HepG2 (cell line): ENCODE measurements at regions of chr13 and their contacts with region 1.

Region 1: DNA sequence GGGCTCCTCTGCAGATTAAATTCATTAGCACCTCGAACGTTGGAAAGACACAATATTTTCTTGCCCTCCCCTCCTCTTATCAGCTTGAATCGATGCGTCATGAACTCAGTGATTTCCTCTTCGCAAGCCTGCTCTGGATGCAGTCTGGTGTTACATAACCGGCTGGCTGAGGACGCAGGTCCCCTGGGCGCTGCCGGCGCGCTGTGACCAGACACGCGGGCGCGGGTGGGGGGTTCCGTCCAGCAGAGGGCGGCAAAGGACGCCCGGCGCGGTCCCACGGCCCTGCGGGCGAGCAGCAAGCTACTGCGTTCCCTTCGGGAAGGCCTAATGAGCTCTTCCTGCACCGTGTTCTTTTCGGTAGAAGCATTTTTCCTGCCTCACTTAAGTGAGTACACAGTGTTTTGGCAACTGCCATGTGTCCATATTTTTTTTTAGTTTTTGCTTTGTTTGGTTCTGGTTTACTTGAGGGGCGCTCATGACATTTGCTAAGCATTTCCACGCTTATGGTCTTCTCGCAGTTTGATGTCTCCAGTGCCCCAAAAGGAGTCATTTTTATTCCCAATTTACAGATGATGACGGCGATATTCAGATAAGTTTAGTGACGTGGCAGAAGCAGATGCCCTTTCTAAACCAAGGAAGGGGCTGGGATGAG is 112.2 kb upstream of the MBNL2 start:
- DNase-seq: peak; percentile 68
- ATAC-seq: peak; percentile 99
- H3K4me3 ChIP-seq: peak overlapping the region in 1 of 3 experiments; percentile 15; a peak in 1 of 6 replicates
- H3K27ac ChIP-seq: no peak overlapping the region
- H3K4me1 ChIP-seq: peaks cover 13% of the 10 kb centered on the region
- H3K27me3 ChIP-seq: peaks cover 0 to 3% of the 10 kb centered on the region in 2 experiments; a peak in 3 of 5 replicates
- CTCF ChIP-seq: peak; percentile 99
- EP300 ChIP-seq: peak in 1 of 2 experiments; percentile 35; a peak in 1 of 4 replicates
- POLR2A ChIP-seq: no peak
- RAD21 ChIP-seq: peak; percentile 99

Region 2: GRCh38 chr13:96279904-96280303 is 830.1 kb before region 1 on chr13:
- CTCF ChIA-PET with region 1: no interaction called
- POLR2A ChIA-PET with region 1: no interaction called
- in situ Hi-C with region 1: no loop called
- intact Hi-C with region 1: loop called (anchors 5 kb)
- DNase-seq: no peak
- ATAC-seq: no peak
- H3K4me3 ChIP-seq: no peak overlapping the region
- H3K27ac ChIP-seq: no peak overlapping the region
- H3K4me1 ChIP-seq: no peaks in the 10 kb centered on the region
- H3K27me3 ChIP-seq: no peaks in the 10 kb centered on the region
- CTCF ChIP-seq: no peak
- EP300 ChIP-seq: no peak
- POLR2A ChIP-seq: no peak
- RAD21 ChIP-seq: no peak

Region 3: GRCh38 chr13:97030705-97031452 is 79.1 kb before region 1 on chr13:
- CTCF ChIA-PET with region 1: no interaction called
- POLR2A ChIA-PET with region 1: no interaction called
- in situ Hi-C with region 1: no loop called
- intact Hi-C with region 1: no loop called
- DNase-seq: peak; percentile 19
- ATAC-seq: peak; percentile 63; the same call in 2 of the 3 replicates
- H3K4me3 ChIP-seq: no peak overlapping the region
- H3K27ac ChIP-seq: no peak overlapping the region
- H3K4me1 ChIP-seq: no peaks in the 10 kb centered on the region
- H3K27me3 ChIP-seq: 0 out of 5 replicates have a peak, but pooled peaks cover 0 to 2% of the 10 kb centered on the region in 2 experiments
- CTCF ChIP-seq: peak; percentile 51
- EP300 ChIP-seq: no peak
- POLR2A ChIP-seq: no peak
- RAD21 ChIP-seq: no peak

Region 4: GRCh38 chr13:97165502-97166425 is 55.8 kb after region 1 on chr13:
- CTCF ChIA-PET with region 1: no interaction called
- POLR2A ChIA-PET with region 1: no interaction called
- in situ Hi-C with region 1: no loop called
- intact Hi-C with region 1: no loop called
- DNase-seq: peak; percentile 68
- ATAC-seq: peak; percentile 93
- H3K4me3 ChIP-seq: no peak overlapping the region
- H3K27ac ChIP-seq: no peak overlapping the region
- H3K4me1 ChIP-seq: peaks cover 12% of the 10 kb centered on the region
- H3K27me3 ChIP-seq: peaks cover 0 to 7% of the 10 kb centered on the region in 2 experiments; a peak in 1 of 5 replicates
- CTCF ChIP-seq: no peak
- EP300 ChIP-seq: peak in 1 of 2 experiments; percentile 37; a peak in 1 of 4 replicates
- POLR2A ChIP-seq: no peak
- RAD21 ChIP-seq: no peak

Region 5: DNA sequence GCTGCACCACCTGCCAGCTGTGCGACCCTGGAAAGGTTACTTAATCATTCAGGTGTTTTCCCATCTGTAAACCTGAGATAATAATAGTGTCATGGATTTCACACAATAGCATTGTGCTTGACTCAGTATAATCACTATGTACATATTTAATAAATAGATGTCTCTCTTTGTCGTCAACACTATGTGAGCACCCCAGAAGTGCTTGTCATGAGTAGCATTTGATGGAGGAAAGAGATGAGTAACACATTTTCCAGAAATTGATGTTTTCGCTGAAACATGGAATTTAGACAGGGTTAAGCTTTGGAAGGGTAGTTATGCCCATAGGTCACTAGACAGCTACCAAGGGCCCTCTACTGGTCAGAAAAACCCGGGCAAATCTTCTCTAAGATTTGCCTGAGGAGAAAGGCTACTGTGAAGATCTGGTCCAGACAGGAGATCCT is 102.7 kb after region 1 on chr13:
- CTCF ChIA-PET with region 1: interaction called, 21 read pairs
- POLR2A ChIA-PET with region 1: no interaction called
- in situ Hi-C with region 1: loop called (anchors 5 kb)
- intact Hi-C with region 1: loop called (anchors 1 kb)
- DNase-seq: no peak
- ATAC-seq: peak; percentile 89
- H3K4me3 ChIP-seq: no peak overlapping the region
- H3K27ac ChIP-seq: no peak overlapping the region
- H3K4me1 ChIP-seq: peaks cover 23% of the 10 kb centered on the region
- H3K27me3 ChIP-seq: no peaks in the 10 kb centered on the region
- CTCF ChIP-seq: peak; percentile 60
- EP300 ChIP-seq: no peak
- POLR2A ChIP-seq: no peak
- RAD21 ChIP-seq: peak; percentile 33; the same call in 1 of the 2 replicates

Region 6: DNA sequence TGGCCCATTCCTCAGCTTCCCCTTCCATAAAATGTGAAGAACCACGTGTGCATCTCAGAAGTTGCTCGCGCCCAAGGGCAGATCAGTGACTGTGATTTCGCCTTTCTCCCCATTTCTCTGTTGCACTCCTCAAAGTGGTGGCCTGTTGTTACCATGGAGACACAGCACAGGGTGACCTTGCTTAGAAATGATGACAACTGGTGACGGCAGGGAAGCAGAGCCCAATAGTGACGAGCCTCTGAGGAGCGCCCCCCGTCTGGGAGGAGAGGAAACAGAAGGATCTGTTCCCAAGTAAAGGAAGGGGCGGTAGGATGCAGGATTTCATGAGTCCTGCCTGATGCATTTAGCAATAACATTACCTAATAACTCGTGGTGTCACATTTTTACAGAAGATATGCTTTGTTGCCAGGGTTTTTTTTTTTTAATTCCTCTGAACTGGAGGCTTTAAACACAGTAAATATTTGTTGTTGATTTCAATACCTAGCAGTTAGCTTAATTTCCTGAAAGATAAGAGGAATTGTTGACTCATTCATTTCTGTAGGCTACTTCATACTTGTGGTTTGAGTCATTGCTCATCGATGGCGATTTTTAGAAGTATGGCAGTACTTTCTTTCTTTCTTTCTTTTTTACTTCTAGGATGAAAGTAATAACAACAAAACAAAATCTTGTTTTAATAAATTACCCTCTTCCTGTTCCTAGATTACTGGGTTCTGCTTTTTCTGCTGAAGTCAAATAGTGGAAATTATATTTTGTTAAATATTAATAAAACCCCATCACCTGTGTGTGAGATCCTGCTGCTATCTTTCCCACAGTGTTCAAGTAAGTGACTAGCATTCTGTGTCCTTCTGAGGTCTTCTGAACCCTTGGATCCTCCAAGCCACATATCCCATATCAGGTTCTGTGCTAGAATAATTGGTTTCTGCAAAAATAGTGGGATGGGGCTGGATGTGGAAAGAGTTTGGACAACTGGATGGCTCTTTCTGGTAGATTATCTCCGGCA is 148.1 kb after region 1 on chr13:
- CTCF ChIA-PET with region 1: no interaction called
- POLR2A ChIA-PET with region 1: no interaction called
- in situ Hi-C with region 1: no loop called
- intact Hi-C with region 1: loop called (anchors 1 kb)
- DNase-seq: peak; percentile 87
- ATAC-seq: peak; percentile 73
- H3K4me3 ChIP-seq: peak overlapping the region in 1 of 3 experiments; percentile 32; a peak in 1 of 6 replicates
- H3K27ac ChIP-seq: peak overlapping the region; percentile 92
- H3K4me1 ChIP-seq: peaks cover 86% of the 10 kb centered on the region
- H3K27me3 ChIP-seq: no peaks in the 10 kb centered on the region
- CTCF ChIP-seq: peak; percentile 61
- EP300 ChIP-seq: peak; percentile 68 to 91
- POLR2A ChIP-seq: no peak
- RAD21 ChIP-seq: no peak

Region 7: GRCh38 chr13:97344265-97345175 is 234.6 kb after region 1 on chr13:
- CTCF ChIA-PET with region 1: interaction called, 21 read pairs
- POLR2A ChIA-PET with region 1: no interaction called
- in situ Hi-C with region 1: loop called (anchors 5 kb)
- intact Hi-C with region 1: loop called (anchors 1 kb)
- DNase-seq: peak; percentile 62
- ATAC-seq: peak; percentile 87
- H3K4me3 ChIP-seq: no peak overlapping the region
- H3K27ac ChIP-seq: no peak overlapping the region
- H3K4me1 ChIP-seq: peaks cover 18% of the 10 kb centered on the region
- H3K27me3 ChIP-seq: no peaks in the 10 kb centered on the region
- CTCF ChIP-seq: peak; percentile 73
- EP300 ChIP-seq: no peak
- POLR2A ChIP-seq: no peak
- RAD21 ChIP-seq: peak; percentile 30; the same call in 1 of the 2 replicates

Region 8: GRCh38 chr13:97359181-97360057 is 249.5 kb after region 1 on chr13:
- CTCF ChIA-PET with region 1: interaction called, 23 read pairs
- POLR2A ChIA-PET with region 1: interaction called, 6 read pairs
- in situ Hi-C with region 1: no loop called
- intact Hi-C with region 1: loop called (anchors 1 kb)
- DNase-seq: peak; percentile 73
- ATAC-seq: peak; percentile 91
- H3K4me3 ChIP-seq: no peak overlapping the region
- H3K27ac ChIP-seq: no peak overlapping the region
- H3K4me1 ChIP-seq: peaks cover 15% of the 10 kb centered on the region
- H3K27me3 ChIP-seq: no peaks in the 10 kb centered on the region
- CTCF ChIP-seq: peak; percentile 84
- EP300 ChIP-seq: no peak
- POLR2A ChIP-seq: no peak
- RAD21 ChIP-seq: peak; percentile 65